ENCODE measurements at regions of chr16 and their contacts with region 1.

Region 1: GRCh38 chr16:58336332-58337089 is 41.7 kb upstream of the PRSS54 start:
- DNase-seq: peak; percentile 85
- CTCF ChIP-seq: peak; percentile 85

Region 2: DNA sequence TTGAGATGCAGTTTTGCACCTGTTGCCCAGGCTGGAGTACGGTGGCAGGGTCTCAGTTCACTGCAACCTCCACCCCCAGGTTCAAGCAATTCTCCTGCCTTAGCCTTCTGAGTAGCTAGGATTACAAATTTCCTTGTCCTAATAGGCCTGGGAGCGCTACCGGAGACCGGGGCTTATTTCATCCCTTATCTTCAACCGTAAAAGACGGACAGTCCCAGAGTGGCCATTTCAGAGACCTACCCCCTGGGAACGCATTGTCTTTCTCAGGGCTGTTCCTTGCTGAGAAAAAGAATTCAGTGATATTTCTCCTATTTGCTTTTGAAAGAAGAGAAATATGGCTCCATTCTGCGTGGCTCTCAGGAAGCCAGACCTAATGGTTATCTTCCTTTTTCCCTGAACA is 16.2 kb after region 1 on chr16:
- CTCF ChIA-PET with region 1: interaction called, 15 read pairs
- POLR2A ChIA-PET with region 1: no interaction called
- DNase-seq: no peak
- CTCF ChIP-seq: no peak

Region 3: GRCh38 chr16:58471321-58471975 is 134.9 kb after region 1 on chr16:
- CTCF ChIA-PET with region 1: interaction called, 13 read pairs
- POLR2A ChIA-PET with region 1: no interaction called
- DNase-seq: no peak
- CTCF ChIP-seq: no peak

Region 4: DNA sequence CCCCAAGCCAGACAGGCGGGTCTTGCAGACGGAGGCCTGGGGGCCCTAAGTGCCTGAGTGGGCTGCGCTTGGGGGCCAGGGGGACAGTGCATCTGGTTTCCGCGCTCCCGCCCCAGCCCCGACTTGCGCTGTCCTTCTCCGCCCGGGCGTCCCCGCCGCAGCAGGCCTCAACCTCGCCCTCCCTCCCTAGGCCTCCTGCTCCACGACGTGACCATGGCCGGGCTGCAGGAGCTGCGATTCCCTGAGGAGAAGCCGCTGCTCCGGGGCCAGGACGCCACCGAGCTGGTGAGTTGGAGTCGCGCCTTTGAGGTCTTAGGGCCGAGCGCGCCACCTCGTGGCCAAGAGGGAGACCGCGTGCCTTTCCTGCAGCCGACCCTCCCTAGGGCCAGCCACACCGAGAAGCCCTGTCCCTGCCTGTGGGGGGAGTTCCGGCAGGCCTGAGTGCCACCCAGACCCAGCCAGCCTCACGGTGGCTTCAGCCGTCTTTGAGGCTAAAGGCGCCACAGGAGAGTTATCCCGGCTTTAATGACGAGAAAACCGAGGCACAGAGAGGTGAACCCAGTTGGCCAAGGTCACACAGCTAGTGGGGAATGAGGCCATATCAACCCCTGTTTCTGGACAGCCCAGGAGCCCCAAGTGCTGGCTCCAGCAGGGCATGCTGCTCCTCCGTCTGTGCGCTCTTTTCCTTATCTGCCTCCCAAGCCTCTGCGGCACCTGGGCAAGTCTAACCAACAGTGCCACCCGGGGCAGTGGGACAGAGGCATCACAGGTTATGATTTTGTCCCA is 151.2 kb after region 1 on chr16:
- CTCF ChIA-PET with region 1: interaction called, 232 read pairs
- POLR2A ChIA-PET with region 1: no interaction called
- DNase-seq: peak; percentile 90
- CTCF ChIP-seq: peak; percentile 94

Region 5: GRCh38 chr16:58494981-58495520 is 158.5 kb after region 1 on chr16:
- CTCF ChIA-PET with region 1: interaction called, 57 read pairs
- POLR2A ChIA-PET with region 1: no interaction called
- DNase-seq: peak; percentile 89
- CTCF ChIP-seq: peak; percentile 43

Region 6: GRCh38 chr16:58661199-58661830 is 324.8 kb after region 1 on chr16:
- CTCF ChIA-PET with region 1: interaction called, 18 read pairs
- POLR2A ChIA-PET with region 1: no interaction called
- DNase-seq: peak; percentile 75
- CTCF ChIP-seq: peak; percentile 70

Region 7: GRCh38 chr16:58755989-58756649 is 419.6 kb after region 1 on chr16:
- CTCF ChIA-PET with region 1: interaction called, 30 read pairs
- POLR2A ChIA-PET with region 1: no interaction called
- DNase-seq: peak; percentile 75
- CTCF ChIP-seq: peak; percentile 90

Measured in GM10248 (cell line).